ENCODE measurements at regions of chr2 and their contacts with region 1.

Region 1: DNA sequence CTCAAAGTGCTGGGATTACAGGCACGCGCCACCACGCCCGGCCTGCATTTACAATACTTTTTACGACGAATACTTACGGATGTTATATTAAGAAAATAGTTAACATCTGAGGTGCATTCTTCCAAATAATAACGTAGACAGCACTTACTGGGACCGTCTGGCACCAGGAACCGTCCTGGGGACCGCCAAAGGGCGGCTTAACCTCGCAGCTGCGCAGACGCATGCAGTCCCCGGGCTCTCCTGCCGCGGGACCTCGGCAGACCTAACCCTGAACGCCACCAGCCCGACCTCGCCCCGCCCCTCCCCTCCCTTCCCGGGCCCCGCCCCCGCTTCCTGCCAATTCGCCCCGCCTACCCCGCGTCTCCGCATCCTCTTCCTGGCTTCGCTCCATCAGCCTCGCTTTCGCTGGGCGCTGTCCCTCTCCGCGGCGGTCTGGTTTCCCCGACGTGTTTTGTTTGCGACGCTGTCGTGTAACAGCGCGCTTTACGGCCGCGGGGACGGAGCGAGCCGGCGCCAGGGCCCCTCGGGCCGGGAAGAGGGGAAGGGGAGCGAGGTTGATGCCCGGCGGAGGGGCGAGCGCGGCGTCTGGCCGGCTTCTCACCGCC is at the start of gene CNOT11:
- DNase-seq: peak; percentile 93
- ATAC-seq: peak; percentile 92
- H3K4me3 ChIP-seq: peak within 1 kb of the TSS; percentile 81
- H3K27ac ChIP-seq: peak within 1 kb of the TSS; percentile 92
- H3K4me1 ChIP-seq: peaks cover 7% of the 10 kb centered on the region
- H3K27me3 ChIP-seq: no peaks in the 10 kb centered on the region
- CTCF ChIP-seq: no peak
- EP300 ChIP-seq: no peak
- POLR2A ChIP-seq: peak; percentile 85
- RAD21 ChIP-seq: no peak
- polyA plus RNA-seq, gene CNOT11: 10.8 to 15.7 TPM

Region 2: GRCh38 chr2:101162561-101163330 is 89.8 kb before region 1 on chr2:
- CTCF ChIA-PET with region 1: no interaction called
- POLR2A ChIA-PET with region 1: no interaction called
- RAD21 ChIA-PET with region 1: no interaction called
- SMC1A ChIA-PET with region 1: no interaction called
- in situ Hi-C with region 1: no loop called
- intact Hi-C with region 1: no loop called
- DNase-seq: no peak
- ATAC-seq: no peak
- H3K4me3 ChIP-seq: no peak overlapping the region
- H3K27ac ChIP-seq: no peak overlapping the region
- H3K4me1 ChIP-seq: no peaks in the 10 kb centered on the region
- H3K27me3 ChIP-seq: no peaks in the 10 kb centered on the region
- CTCF ChIP-seq: no peak
- EP300 ChIP-seq: no peak
- POLR2A ChIP-seq: no peak
- RAD21 ChIP-seq: no peak

Region 3: DNA sequence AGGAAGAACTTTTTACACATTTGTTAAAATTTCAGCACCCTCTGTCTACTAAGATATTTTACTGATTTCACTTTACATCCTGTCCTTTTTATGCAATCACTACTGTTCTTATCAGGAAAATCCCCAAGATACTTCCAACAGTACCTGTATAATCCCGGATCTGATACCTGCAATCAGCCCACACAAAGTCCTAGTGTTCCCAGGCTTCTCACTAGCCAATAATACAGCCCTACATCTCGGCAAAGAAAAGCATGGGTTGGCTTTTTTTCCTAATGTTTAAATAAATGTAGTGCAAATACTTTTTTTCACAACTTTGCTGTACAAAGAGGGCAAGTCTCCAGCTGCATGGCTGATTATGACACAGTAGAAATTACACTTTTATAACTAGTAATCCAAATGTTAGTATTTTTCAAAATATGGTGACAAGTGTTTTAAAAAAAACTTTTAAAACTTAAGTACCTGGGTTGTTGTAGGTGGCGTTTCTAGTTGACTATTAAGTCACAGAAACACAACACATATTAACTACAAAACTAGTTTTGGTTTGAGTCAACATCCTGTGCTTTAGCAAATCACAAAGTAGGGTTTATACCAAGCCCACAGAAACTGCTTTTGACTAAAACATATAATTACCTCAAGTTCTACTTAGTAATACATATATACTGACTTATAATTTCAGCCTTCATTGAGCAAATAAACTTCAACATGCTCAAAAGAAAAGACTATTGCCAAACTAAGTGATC is 19.7 kb after region 1 on chr2:
- CTCF ChIA-PET with region 1: interaction called, 7 read pairs
- POLR2A ChIA-PET with region 1: interaction called, 14 read pairs
- RAD21 ChIA-PET with region 1: interaction called, 12 read pairs
- SMC1A ChIA-PET with region 1: interaction called, 17 read pairs
- in situ Hi-C with region 1: no loop called
- intact Hi-C with region 1: no loop called
- DNase-seq: peak; percentile 73
- ATAC-seq: peak; percentile 93
- H3K4me3 ChIP-seq: no peak overlapping the region
- H3K27ac ChIP-seq: peak overlapping the region; percentile 50; the same call in 1 of the 2 replicates
- H3K4me1 ChIP-seq: peaks cover 13% of the 10 kb centered on the region
- H3K27me3 ChIP-seq: no peaks in the 10 kb centered on the region
- CTCF ChIP-seq: no peak
- EP300 ChIP-seq: peak; percentile 46 to 74; a peak in 2 of 4 replicates
- POLR2A ChIP-seq: no peak
- RAD21 ChIP-seq: no peak

Measured in GM12878 (cell line).